ENCODE measurements at regions of chr19 and their contacts with region 1.

Region 1: DNA sequence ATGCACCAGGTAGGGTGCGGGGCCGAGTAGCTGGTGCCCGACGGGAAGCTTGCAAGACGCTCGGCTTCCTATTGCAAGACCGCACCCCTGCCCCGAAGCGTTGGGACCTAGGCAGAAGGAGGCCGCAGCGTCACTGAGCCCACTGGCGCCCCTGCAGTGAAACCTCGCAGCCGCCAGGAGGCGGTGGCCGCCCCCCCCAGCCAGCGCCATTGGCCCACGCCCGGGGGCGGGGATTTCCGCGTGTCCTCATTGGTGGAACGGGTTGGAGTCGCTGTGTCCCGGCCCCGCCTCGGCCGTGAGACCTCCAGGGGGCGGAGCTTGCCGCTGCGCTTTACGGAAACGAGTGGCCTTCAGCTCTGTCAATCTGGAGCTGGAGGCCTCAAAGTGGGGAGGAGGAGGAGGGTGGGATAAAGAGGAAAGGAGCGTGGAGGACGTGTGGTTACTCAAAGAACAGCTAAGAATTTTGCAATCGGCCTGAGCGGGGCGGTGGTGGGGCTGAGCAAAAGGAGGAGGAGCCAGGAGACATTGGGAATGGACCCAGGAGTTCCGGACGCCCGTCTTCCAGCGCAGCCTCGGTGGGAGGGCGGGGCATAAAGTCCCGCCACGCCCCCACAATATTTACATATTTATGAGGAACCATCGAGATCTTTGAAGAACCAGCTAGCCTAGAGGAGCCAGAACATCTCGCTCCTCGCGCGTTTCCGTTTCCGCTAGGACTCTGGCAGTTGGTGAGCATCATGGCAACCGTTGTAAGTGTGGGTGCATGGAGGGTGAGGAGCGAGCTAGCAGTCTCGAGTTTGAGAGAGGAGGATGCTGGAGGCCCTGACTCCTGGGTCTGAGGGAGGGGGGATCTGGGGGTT is at the starts of genes GYS1 and RUVBL2:
- DNase-seq: peak; percentile 99

Region 2: DNA sequence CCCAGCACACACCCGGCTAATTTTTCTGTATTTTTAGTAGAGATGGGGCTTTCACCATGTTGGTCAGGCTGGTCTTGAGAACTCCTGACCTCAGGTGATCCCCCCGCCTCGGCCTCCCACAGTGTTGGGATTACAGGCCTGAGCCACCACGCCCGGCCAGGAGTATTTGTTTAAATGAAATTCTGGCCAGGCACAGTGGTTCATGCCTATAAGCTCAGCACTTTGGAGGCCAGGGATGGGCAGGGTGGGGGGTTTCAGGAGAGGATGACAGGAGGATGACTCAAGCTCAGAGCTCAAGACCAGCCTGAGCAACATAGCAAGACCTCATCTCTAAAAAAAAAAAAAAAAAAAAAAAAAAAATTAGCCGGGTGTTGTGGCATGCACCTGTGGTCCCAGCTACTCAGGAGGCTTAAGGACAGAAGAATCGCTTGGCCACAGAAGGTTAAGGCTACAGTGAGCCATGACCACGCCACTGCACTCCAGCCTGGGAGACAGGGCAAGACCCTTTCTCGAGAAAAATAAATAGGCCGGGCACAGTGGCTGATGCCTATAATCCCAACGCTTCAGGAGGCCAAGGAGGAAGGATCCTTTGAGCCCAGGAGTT is 68.1 kb before region 1 on chr19:
- CTCF ChIA-PET with region 1: no interaction called
- POLR2A ChIA-PET with region 1: no interaction called
- DNase-seq: no peak

Region 3: DNA sequence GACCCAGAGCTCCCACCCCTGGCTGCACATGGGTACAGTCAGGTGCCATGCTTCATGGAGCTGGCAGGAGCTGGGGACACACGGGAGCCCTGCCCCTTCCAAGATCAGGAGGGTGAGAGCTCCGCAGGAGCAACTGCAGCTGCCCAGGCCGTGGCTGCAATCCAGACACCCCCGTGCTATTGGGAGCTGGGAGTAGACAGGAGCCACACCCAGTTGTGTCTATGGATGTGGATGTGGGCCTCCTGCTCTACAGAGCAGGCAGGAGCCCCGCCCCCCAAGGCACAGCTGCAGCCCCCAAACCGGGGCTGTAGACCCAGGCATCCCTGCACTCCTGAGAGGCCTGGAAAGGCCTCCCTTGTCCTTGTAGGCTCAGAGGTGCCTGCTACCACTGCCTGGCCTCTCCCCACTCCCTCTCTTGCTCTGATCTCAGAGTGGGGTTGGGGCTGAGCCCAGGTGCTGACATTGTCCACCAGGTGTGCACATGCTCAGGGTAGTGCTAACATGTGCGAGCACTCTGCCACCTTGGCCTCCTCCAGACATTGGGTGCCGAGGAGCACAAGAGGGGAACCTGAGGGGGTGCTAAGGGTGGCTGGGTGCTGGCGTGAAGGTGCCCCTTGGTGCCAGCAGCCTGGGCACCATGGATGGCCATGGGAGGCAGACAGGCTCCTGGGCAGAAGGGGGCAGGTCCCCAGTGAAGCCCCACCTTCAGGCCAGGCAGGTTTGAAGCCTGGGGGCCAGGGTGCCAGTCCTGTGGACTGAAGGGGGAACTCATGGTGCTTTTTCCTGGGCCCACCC is 46.7 kb before region 1 on chr19:
- CTCF ChIA-PET with region 1: no interaction called
- POLR2A ChIA-PET with region 1: no interaction called
- DNase-seq: no peak

Region 4: GRCh38 chr19:48975947-48976847 is 17.2 kb before region 1 on chr19:
- CTCF ChIA-PET with region 1: interaction called, 26 read pairs
- POLR2A ChIA-PET with region 1: interaction called, 10 read pairs
- DNase-seq: peak; percentile 57

Region 5: DNA sequence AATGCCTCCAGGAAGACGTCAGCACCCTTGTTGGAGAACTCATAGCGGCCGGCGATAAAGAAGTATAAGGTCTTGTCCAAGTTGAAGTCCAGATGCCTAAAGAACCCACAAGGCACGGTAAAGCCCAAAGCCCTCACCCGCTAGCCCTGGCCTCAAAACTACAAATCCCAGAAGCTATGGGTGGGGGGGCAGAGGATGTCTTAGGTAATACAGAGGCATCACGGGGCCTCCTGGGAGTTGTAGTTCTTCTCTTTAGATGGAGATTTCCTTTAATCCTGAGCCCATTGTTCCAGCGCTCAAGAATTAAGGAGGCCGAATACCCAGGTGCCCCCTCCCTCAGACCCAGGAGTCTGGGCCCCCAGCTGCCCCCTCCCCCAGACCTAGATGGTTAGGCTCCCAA is 11.1 kb before region 1 on chr19:
- CTCF ChIA-PET with region 1: interaction called, 26 read pairs
- POLR2A ChIA-PET with region 1: interaction called, 12 read pairs
- DNase-seq: no peak

Region 6: DNA sequence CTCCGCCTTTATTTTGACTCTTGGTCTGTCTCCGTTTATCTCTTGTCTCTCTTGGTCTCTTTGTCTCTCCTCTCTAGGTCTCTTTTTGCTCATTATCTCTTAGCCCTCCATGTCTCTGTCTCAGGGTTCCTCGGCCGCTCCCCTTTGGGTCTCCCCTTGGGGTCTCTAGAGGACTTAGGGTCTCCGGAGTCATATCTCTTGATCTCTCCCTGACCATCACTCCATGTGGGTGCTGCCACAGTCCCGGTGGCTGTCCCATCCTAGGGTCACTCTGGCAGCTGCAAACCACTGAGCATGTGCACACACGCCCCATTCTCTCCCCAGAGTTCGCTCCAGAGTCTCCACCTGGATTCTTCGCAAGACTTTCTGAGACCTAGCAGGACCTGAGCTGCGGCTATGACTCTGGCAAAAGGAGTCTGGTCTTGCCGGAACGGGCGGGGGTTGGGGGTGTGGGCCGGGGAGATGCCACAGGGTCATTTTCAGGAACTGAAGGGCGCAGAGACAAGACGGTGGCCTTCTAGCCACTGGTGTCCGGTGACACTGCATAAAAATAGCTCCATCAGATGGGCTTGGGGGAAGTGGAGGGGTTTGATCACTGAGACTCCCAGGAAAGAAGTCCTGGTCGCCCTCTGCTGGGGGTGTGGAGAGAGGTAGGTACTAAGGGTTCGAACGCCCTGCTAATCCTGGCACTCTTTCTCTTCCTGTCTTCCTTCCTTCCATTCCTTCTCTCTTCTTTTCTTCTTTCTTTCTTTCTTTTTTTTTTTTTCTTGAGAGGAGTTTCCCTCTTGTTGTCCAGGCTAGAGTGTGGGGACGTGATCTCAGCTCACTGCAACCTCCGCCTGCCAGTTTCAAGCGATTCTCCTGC is 80.3 kb after region 1 on chr19:
- CTCF ChIA-PET with region 1: interaction called, 5 read pairs
- POLR2A ChIA-PET with region 1: interaction called, 10 read pairs
- DNase-seq: peak; percentile 70